Body of pancreas (tissue), 4 donors: ENCODE measurements at regions of chr11 and their contacts with region 1.

Region 1: DNA sequence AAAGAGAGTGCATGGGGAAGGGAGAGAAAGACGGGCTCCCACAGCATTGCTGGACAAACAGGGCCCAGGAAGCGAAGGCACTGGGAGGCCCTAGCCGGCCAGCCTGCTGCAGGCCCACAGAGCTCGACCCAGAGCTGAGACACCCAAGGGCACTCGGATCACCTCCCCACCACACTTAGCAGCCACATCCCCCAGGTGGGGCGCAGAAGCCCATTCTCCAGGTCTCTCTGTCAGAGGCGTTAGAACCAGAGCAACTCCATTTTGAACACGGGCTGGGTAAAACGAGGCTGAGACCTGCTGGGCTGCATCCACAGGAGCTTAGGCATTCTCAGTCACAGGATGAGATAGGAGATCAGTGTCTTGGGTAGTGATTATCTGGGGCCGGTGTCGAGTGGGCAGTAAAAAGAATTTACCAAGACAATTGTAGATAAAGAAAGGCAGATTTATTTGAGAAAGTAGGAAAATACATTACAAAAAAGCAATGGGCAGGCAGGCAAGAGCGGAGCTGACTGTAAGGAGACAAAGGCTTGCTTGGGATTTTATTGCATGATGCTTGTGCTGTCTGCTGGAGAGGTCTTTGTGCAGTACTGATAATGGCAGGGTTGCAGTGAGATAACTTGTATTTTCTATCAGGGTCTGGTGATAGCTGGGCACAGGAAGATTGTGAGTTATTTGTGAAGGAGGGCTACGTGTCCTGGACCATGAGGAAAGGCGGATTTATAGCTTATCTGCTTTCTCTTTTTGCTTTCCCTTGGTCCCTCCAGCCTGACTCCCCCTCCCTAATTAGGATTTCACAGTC is 13.4 kb upstream of the CAPN5 start:
- DNase-seq: no peak
- ATAC-seq: no peak
- H3K4me3 ChIP-seq: no peak overlapping the region
- H3K27ac ChIP-seq: no peak overlapping the region
- H3K4me1 ChIP-seq: no peaks in the 10 kb centered on the region
- H3K27me3 ChIP-seq: no peaks in the 10 kb centered on the region
- CTCF ChIP-seq: no peak
- POLR2A ChIP-seq: no peak

Region 2: GRCh38 chr11:76939211-76939631 is 114.2 kb before region 1 on chr11:
- intact Hi-C with region 1: no loop called
- DNase-seq: no peak
- ATAC-seq: no peak
- H3K4me3 ChIP-seq: no peak overlapping the region
- H3K27ac ChIP-seq: no peak overlapping the region
- H3K4me1 ChIP-seq: no peaks in the 10 kb centered on the region
- H3K27me3 ChIP-seq: no peaks in the 10 kb centered on the region
- CTCF ChIP-seq: no peak
- POLR2A ChIP-seq: no peak

Region 3: DNA sequence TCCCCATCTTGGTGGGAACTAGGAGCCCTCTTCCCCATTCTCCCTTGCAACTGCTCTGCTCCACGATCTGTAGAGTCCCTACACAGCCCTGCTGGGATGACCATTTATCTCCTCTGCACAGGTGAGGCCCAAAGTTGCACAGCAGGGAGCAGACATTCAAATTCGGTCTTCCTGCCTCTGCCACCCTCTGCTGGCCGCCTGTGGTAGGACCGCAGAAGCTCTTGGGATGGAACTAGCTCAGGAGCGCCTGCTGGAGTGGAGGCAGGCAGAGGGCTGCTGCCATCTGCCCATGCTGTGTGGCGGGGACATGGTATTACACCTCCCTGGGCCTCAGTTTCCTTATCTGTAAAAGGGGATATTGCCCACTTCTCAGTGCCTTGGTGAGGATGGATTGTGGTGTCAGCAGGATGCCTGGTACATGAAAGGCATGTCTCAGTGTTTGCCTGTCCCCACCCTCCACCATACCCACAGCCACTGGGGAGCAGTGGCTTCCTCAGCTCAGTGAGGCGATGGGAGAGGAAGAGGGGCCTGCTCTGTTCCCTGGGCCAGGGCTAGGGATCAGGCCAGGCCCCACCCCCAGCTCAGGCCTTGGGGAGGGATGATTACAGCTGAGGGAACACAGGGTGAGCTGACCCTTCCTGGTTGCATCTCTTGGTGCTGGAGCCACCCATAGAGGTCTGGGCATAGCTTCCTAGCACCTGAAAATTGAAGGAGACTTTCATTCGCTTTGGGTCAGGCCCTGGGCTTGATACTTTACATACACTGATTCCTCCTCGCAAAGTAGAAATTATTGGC is 37.9 kb after region 1 on chr11:
- intact Hi-C with region 1: loop called (anchors 5 kb)
- DNase-seq: peak; percentile 86 to 90 (median 88)
- ATAC-seq: peak; percentile 87
- H3K4me3 ChIP-seq: no peak overlapping the region
- H3K27ac ChIP-seq: no peak overlapping the region
- H3K4me1 ChIP-seq: peaks cover 39% of the 10 kb centered on the region
- H3K27me3 ChIP-seq: no peaks in the 10 kb centered on the region
- CTCF ChIP-seq: peak; percentile 83 to 97 (median 95)
- POLR2A ChIP-seq: no peak